Astrocyte of the spinal cord (primary cell): ENCODE measurements at regions of chr2 and their contacts with region 1.

Region 1: GRCh38 chr2:6917071-6917760 is at the start of gene RNF144A:
- DNase-seq: peak; percentile 40
- H3K4me3 ChIP-seq: peak within 1 kb of the TSS; percentile 52
- CTCF ChIP-seq: peak; percentile 23

Region 2: DNA sequence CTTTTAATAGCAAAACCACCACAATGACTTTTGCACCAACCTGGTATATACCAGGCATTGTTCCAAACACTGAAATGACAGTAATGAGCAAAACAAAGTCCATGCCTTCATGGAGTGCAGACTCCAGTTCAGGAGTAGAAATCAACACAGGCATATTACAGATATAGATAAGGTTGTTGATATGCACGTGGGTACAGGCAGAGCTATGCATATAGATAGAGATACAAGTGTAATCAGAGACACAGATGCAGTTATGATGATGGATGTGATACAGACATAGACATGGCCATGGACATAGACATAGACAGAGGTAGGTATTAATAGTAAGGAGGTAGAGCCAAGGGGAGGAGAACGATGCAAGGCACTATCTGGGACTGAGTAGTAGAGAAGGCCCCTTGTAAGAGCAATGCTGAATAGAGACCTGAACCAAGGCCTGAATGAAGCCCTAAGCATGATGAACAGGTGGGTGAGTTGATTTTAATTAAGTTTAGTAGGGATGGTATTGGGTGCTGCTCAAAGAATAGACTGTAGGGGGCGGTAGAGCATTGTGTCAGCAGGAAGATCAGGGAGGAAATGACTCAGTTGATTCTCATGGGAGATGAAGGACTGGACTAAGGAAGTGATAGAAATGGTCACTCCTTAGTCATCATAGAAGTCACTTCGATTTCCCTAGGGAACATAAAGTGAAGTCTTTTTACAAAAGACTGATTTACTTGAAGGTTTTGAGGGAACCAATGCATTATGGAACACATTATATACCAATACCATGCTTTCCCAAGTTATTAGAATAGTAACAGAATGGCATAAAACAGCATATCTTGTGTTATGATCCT is 90.9 kb before region 1 on chr2:
- in situ Hi-C with region 1: no loop called
- DNase-seq: peak; percentile 71
- H3K4me3 ChIP-seq: no peak overlapping the region
- CTCF ChIP-seq: peak; percentile 66

Region 3: GRCh38 chr2:7014174-7014640 is 97.0 kb after region 1 on chr2:
- in situ Hi-C with region 1: loop called (anchors 25 kb)
- DNase-seq: peak; percentile 89
- H3K4me3 ChIP-seq: no peak overlapping the region
- CTCF ChIP-seq: peak; percentile 71

Region 4: DNA sequence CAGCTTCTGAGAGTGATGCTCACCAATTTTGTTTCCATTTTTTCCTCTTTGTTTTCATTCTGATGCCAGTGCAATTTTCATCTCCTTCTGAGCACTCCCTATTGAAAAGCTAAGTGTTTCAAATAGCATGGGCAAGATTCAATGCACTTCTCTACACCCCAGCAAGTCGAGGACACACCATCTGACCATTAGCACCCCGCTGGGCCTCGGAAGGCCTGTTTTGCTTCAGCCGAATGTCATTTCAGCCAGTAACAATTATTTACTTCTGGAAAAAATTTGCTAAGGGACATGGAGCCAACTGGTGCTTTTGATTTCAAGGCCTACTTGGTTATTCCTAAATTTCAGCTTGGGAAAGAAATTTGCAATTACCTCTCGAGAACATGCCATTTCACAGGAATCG is 392.4 kb after region 1 on chr2:
- in situ Hi-C with region 1: no loop called
- DNase-seq: no peak
- H3K4me3 ChIP-seq: no peak overlapping the region
- CTCF ChIP-seq: no peak